IMR-90 (cell line): ENCODE measurements at regions of chr6 and their contacts with region 1.

Region 1: GRCh38 chr6:11270030-11271027 is 37.9 kb upstream of the NEDD9 start:
- DNase-seq: peak; percentile 10
- ATAC-seq: no peak
- H3K4me3 ChIP-seq: no peak overlapping the region
- H3K27ac ChIP-seq: peak overlapping the region; percentile 55; the same call in 1 of the 2 replicates
- H3K4me1 ChIP-seq: peaks cover 22% of the 10 kb centered on the region
- H3K27me3 ChIP-seq: no peaks in the 10 kb centered on the region
- CTCF ChIP-seq: no peak
- POLR2A ChIP-seq: no peak
- RAD21 ChIP-seq: no peak

Region 2: DNA sequence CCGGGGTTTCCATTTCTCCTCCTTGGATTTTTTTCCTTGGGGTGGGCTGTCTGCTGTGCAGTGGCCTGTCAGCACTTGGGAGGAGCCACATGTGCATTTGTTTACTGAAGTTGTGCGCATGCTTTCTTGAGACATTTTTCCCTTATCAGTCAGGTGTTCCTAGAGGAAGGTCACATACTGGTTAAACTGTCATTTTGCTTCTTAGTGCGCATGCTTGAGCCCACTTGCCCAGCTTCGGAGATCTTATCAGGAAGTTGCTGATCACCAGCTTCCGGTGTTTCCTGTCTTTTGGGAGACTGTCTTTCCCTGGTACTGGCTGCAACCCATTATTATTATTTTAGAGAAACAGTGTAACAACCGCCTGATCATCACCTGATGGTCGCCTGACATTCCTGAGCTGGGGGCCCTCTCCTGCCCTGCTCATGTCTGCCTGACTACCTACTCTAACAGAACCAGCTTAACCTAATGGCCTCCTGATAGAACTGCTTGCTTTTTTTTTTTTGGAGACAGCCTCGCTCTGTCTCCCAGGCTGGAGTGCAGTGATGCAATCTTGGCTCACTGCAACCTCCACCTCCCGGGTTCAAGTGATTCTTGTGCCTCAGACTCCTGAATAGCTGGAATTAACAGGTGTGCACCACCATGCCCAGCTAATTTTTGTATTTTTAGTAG is 158.4 kb before region 1 on chr6:
- CTCF ChIA-PET with region 1: no interaction called
- POLR2A ChIA-PET with region 1: no interaction called
- dilution Hi-C with region 1: no loop called
- in situ Hi-C with region 1: no loop called
- intact Hi-C with region 1: no loop called
- DNase-seq: no peak
- ATAC-seq: no peak
- H3K4me3 ChIP-seq: no peak overlapping the region
- H3K27ac ChIP-seq: no peak overlapping the region
- H3K4me1 ChIP-seq: peaks cover 6% of the 10 kb centered on the region; the same call in 1 of the 2 replicates
- H3K27me3 ChIP-seq: no peaks in the 10 kb centered on the region
- CTCF ChIP-seq: no peak
- POLR2A ChIP-seq: no peak
- RAD21 ChIP-seq: no peak

Region 3: GRCh38 chr6:11196511-11197174 is 73.7 kb before region 1 on chr6:
- CTCF ChIA-PET with region 1: no interaction called
- POLR2A ChIA-PET with region 1: no interaction called
- dilution Hi-C with region 1: no loop called
- in situ Hi-C with region 1: no loop called
- intact Hi-C with region 1: loop called (anchors 2 kb)
- DNase-seq: peak; percentile 85
- ATAC-seq: peak; percentile 43
- H3K4me3 ChIP-seq: no peak overlapping the region
- H3K27ac ChIP-seq: peak overlapping the region; percentile 95
- H3K4me1 ChIP-seq: peaks cover 39% of the 10 kb centered on the region
- H3K27me3 ChIP-seq: no peaks in the 10 kb centered on the region
- CTCF ChIP-seq: no peak
- POLR2A ChIP-seq: no peak
- RAD21 ChIP-seq: no peak

Region 4: DNA sequence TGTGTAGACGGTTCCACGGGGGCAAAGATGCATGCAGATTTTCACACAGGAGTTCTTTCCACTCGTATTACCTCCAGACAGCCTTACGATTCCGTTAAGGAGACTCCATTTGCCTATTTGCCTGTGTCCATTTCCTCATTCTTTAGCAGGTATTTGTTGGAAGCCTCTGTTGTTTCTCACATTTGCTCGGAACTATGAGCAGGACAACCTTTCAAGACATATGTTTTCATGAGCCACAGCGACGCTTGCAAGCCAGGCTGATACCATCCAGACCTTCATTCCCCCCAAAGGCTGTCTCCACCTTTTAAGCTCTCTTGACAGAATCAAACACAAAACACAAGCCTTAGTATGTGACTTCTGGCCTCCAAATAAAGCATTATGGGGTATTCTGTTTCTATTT is 19.7 kb after region 1 on chr6:
- CTCF ChIA-PET with region 1: no interaction called
- POLR2A ChIA-PET with region 1: no interaction called
- dilution Hi-C with region 1: no loop called
- in situ Hi-C with region 1: no loop called
- intact Hi-C with region 1: no loop called
- DNase-seq: no peak
- ATAC-seq: no peak
- H3K4me3 ChIP-seq: no peak overlapping the region
- H3K27ac ChIP-seq: no peak overlapping the region
- H3K4me1 ChIP-seq: no peaks in the 10 kb centered on the region
- H3K27me3 ChIP-seq: no peaks in the 10 kb centered on the region
- CTCF ChIP-seq: no peak
- POLR2A ChIP-seq: no peak
- RAD21 ChIP-seq: no peak

Region 5: GRCh38 chr6:11317885-11318771 is 47.8 kb after region 1 on chr6:
- CTCF ChIA-PET with region 1: no interaction called
- POLR2A ChIA-PET with region 1: no interaction called
- dilution Hi-C with region 1: no loop called
- in situ Hi-C with region 1: no loop called
- intact Hi-C with region 1: loop called (anchors 5 kb)
- DNase-seq: peak; percentile 98
- ATAC-seq: peak; percentile 91
- H3K4me3 ChIP-seq: no peak overlapping the region
- H3K27ac ChIP-seq: peak overlapping the region; percentile 25; the same call in 1 of the 2 replicates
- H3K4me1 ChIP-seq: peaks cover 10% of the 10 kb centered on the region
- H3K27me3 ChIP-seq: no peaks in the 10 kb centered on the region
- CTCF ChIP-seq: no peak
- POLR2A ChIP-seq: no peak
- RAD21 ChIP-seq: peak; percentile 26; the same call in 1 of the 2 replicates

Region 6: GRCh38 chr6:11434565-11435326 is 164.4 kb after region 1 on chr6:
- CTCF ChIA-PET with region 1: no interaction called
- POLR2A ChIA-PET with region 1: no interaction called
- dilution Hi-C with region 1: no loop called
- in situ Hi-C with region 1: no loop called
- intact Hi-C with region 1: loop called (anchors 5 kb)
- DNase-seq: peak; percentile 94
- ATAC-seq: peak; percentile 86
- H3K4me3 ChIP-seq: no peak overlapping the region
- H3K27ac ChIP-seq: peak overlapping the region; percentile 68; the same call in 1 of the 2 replicates
- H3K4me1 ChIP-seq: peaks cover 24% of the 10 kb centered on the region
- H3K27me3 ChIP-seq: no peaks in the 10 kb centered on the region
- CTCF ChIP-seq: no peak
- POLR2A ChIP-seq: no peak
- RAD21 ChIP-seq: 0 out of 2 replicates have a peak, but pooled peaks have one; percentile 3